GM10248 (cell line): ENCODE measurements at regions of chr19 and their contacts with region 1.

Region 1: DNA sequence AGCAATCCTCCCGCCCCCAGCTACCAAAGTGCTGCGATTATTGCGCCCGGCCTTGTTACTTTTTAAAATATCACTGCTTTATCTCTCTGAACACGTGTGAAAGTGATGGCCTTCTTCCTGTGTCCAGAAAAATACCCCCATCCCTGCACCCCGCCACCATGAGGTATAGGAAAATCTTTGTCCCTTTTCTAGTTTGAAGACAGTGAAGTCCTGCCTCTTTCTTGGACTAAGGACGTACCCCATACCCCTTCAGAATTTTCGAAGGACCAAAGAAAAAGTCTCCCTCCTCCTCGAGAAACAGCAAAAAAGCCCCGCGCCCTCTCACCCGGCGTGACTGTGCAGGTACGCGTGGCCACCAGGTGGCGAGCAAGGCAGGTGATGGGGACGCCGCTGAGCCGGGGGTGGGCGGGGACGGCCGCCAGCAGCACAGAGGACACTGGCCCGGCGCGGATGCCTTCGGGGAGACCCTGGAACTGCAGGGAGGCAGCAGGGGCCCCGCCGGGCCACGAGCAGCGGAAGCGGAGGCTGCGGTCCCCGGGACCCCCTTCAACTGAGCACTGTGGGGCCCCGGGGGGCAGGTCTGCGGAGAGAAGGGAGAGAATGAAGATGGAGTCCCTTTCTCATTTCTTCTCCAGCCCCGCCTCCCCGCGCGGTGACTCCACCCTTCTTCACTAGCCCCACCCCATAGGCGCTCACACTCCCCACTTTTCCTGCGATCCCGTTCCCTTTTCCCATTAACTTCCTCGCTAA is 3.2 kb downstream of the VSIG10L start:
- DNase-seq: peak; percentile 93
- CTCF ChIP-seq: peak; percentile 87

Region 2: GRCh38 chr19:51207744-51208143 is 131.0 kb before region 1 on chr19:
- CTCF ChIA-PET with region 1: no interaction called
- POLR2A ChIA-PET with region 1: no interaction called
- DNase-seq: no peak
- CTCF ChIP-seq: no peak

Region 3: GRCh38 chr19:51325161-51325976 is 13.4 kb before region 1 on chr19:
- CTCF ChIA-PET with region 1: no interaction called
- POLR2A ChIA-PET with region 1: no interaction called
- DNase-seq: no peak
- CTCF ChIP-seq: no peak

Region 4: GRCh38 chr19:51367565-51368365 is 29.0 kb after region 1 on chr19:
- CTCF ChIA-PET with region 1: interaction called, 11 read pairs
- POLR2A ChIA-PET with region 1: interaction called, 10 read pairs
- DNase-seq: peak; percentile 99
- CTCF ChIP-seq: no peak